Motor neuron (in vitro differentiated cells): ENCODE measurements at regions of chr1 and their contacts with region 1.

Region 1: DNA sequence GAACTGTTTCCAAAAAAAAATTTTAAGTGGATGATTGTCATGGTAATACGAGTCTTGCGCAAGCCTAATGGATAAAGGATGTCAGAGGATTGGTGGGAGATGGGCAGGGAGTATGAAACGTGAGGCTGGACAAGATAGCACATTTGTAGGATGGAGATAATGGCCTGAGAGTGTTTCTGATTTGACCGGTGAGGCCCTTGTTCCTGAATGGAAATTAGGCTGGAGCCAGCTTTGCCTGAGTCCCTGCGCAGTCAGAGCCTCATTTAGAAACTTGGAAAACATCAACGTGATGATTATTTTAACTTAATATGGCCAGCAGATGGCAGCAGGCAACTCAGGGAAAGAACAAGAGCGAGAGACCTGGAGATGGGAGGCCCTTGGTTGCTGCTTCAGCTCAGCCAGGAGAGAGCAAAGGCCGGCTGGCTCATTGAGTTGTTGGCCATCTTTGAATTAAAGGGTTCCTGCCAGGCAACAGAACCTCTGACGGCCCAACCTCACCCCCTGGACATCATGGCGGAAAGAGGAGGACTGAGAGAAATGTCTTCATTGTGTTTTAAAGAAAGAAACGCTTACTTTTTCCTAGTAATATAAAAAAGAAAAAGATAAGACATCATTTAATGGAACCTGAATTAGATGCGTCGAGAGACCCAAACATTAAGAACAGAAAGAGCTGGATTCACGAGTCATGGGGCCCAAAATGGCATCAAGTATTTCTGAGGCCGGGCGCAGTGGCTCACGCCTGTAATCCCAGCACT is 80.3 kb downstream of the SELENOF start:
- ATAC-seq: peak in 5 of 8 experiments; percentile 22 to 96 (median 81)
- H3K4me3 ChIP-seq: peak overlapping the region in 1 of 5 donors; percentile 32
- H3K27ac ChIP-seq: no peak overlapping the region
- H3K4me1 ChIP-seq: no peaks in the 10 kb centered on the region

Region 2: GRCh38 chr1:86289161-86289560 is 544.5 kb before region 1 on chr1:
- in situ Hi-C with region 1: no loop called
- ATAC-seq: no peak
- H3K4me3 ChIP-seq: no peak overlapping the region
- H3K27ac ChIP-seq: no peak overlapping the region
- H3K4me1 ChIP-seq: no peaks in the 10 kb centered on the region

Region 3: DNA sequence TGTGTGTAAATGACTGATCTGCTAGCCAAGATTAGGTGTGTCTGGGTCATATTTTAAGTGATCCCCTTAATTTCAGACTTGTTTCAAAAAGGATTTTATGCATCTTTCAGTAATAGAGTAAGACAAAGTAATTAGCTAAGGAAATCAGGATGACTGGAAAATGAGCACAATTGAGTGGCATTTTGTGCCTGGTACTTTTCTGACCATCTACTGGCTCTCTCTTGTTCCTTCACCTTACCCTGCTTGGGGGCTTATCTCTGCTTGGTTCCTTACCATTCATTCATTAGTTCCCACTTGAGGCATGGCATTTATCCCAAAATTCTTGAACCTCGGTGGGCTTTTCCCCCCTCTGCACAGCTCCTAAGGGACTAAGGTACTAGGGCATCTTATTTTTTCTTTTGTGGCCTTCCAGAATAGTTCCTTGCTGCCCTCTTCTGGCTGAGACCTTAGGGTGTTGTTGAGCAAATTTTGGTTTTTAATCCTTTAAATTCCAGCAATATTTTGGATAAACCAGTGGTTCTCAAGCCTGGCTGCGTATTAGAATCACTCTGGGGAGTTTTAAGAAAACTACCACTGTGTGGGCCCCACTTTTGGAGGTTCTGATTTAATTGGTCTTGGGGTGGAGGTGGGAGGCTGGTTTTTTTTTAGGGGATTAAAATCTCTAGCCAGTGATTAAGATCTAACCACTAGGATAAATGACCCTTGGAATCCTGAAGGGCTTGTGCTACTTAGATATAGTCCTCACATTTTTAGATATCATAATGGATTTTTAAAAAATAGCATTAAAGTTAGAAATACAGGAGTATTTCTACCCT is 131.6 kb after region 1 on chr1:
- in situ Hi-C with region 1: loop called in 1 of 9 experiments (anchors 25 kb)
- ATAC-seq: peak in 3 of 8 experiments; percentile 47 to 72 (median 61)
- H3K4me3 ChIP-seq: no peak overlapping the region
- H3K27ac ChIP-seq: no peak overlapping the region
- H3K4me1 ChIP-seq: no peaks in the 10 kb centered on the region

Region 4: DNA sequence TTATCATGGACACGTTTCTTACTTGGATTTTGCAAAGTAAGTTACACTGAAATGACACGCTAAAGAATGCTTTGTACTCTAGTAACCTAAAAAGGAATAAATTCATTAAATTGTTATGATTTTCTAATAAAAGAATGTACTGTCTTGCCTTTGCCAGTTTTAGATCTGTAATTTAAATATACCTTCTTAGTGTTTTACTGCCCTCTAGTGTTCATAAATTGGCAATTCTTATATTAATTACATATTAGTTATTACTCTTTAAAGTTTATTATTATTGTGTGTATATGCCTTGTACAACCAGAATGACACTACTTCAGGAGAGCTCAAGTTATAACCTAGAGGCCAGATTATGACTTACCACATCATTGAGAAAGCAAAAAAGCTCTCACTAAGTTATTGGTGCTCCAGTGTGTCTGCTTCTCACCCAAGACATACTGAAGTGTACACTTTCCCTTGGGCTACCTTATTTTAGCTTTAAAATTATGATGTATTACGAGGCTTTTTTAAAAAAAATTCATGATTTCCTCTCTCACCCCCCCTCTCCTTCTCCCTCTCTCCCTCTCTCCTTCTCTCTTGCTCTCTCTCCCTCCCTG is 250.7 kb after region 1 on chr1:
- in situ Hi-C with region 1: loop called in 3 of 9 experiments (anchors 25 kb)
- ATAC-seq: peak in 3 of 8 experiments; percentile 44 to 52 (median 50)
- H3K4me3 ChIP-seq: no peak overlapping the region
- H3K27ac ChIP-seq: no peak overlapping the region
- H3K4me1 ChIP-seq: peaks cover 0 to 7% of the 10 kb centered on the region in 2 donors